ENCODE measurements at regions of chr20 and their contacts with region 1.

Region 1: GRCh38 chr20:3051385-3052019 is 5.7 kb downstream of the MRPS26 start:
- DNase-seq: no peak

Region 2: DNA sequence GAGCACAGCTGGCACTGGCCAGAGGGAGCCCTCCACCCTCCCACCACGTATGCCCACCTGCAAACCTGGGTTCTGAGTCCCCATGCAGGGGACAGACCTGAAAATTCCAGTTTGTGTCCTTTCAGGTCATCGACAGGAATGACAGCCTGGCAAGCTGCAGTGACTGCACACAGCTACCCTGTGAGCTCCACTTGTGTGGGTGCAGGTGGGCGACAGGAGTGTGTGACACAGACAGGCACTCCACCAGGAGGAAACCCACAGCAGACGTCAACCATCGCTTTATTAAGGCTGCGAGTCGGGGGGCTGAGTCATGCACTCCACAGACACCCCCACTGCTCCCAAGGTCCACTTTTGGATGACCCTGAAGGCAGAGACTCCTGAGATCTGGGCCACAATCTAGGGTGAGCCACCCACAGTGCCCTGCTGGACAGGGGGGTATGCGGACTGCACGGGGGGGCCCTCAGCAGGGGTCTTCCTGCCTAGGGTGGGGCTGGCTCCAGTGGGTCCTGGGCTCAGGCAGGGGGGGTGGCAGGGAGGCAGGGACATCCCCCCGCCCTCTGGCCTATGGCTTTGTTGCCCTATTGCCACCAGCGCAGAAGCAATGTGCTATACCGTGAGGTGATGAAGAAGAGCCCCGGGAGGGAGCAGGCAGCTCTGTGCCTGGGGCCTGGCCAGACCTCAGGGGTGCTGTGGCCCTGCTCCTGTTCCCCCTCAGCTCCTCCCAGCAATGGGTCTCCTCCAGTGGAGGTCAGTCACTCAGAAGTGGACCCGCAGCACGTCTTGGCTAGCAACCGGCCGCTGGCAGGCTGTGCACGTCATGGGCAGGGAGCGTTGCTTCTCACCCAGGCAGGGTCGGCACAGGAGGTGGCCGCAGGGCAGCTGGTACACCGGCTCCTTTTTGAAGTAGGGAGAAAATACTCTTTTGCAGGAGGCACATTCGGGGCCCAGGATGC is 58.1 kb after region 1 on chr20:
- intact Hi-C with region 1: loop called in 1 of 2 experiments (anchors 2 kb)
- DNase-seq: no peak

Region 3: GRCh38 chr20:3115190-3116107 is 63.9 kb after region 1 on chr20:
- intact Hi-C with region 1: loop called (anchors 2 to 5 kb)
- DNase-seq: peak; percentile 71

Region 4: DNA sequence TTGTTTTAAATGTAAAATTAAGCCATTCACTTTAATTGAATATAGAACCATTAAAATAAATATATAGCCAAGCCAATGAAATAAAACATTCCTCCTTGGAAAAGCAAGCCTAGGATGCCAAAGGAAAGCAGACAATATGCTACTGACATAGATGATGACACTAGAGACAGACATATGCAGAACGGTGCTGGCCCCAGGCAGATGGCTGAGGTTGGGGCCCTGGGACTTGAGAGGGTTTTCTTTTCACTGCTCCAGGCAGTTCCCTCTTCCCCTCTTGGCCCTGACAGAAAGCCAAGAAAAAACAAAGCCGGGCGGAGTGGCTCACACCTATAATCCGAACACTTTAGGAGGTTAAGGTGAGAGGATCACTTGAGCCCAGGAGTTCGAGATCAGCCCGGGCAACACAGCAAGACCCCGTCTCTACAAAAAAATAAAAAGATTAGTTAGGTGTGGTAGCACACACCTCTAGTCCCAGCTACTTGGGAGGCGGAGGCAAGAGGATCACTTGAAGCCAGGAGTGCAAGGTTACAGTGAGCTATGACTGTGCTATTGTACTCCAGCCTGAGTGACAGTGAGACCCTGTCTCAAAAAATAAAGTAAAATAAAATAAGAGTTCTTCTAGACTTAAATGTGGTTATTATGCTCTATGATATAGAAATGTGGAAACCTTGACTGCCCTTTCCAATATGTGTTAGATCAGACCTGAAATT is 76.9 kb after region 1 on chr20:
- intact Hi-C with region 1: no loop called
- DNase-seq: no peak

Measured in posterior vena cava (tissue), 2 donors.